Activated CD8-positive, alpha-beta T cell treated with anti-CD3 and anti-CD28 coated beads, Interleukin-2, amount 10 ng/mL, durations not matched to agents 7 days and 5 days (primary cell): ENCODE measurements at regions of chr10 and their contacts with region 1.

Region 1: DNA sequence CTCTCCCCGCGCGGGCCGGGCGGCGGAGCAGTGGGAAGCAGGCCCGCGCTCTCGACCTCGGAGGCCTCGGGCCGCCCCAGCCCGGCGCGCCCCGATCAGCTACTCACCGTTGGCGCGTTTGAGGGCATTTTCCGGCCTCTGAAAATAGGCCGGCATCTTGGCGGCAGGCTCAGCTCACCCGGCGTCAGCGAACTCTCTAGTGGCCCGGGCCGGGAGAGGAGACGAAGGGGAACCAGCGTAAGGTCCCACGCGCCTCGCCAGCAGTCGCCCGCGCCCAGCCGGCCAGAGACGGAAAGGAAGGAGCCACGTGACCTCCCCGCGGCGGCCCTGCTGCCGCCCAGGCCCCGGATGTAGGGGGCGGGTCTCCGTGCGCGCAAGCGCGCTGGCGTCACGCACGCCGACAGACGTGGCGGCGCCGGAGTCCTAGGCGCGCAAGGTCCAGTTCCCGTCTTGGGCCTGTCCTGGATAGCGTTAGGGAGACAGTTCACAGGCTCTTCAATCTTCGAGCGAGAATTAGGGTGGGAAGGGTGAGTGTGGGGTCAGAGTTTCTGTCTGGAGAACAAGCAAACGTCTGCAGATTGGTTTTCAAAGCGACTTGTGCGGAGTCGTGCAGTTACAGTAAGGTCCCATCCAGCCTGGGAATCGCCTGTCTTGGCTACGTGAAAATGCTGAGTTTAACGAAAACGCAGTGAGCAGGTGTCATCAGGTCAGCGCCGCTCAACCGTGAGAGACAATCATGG is at the start of gene EIF3A:
- DNase-seq: peak; percentile 93
- ATAC-seq: peak; percentile 79
- H3K4me3 Mint-ChIP-seq: peak within 1 kb of the TSS; percentile 94
- H3K27ac Mint-ChIP-seq: peak within 1 kb of the TSS; percentile 96
- H3K4me1 Mint-ChIP-seq: peaks cover 38% of the 10 kb centered on the region
- H3K27me3 Mint-ChIP-seq: peaks cover 4% of the 10 kb centered on the region
- total RNA-seq, gene EIF3A: 126 to 127 TPM

Region 2: GRCh38 chr10:119070395-119071165 is 10.1 kb before region 1 on chr10:
- CTCF ChIA-PET with region 1: interaction called, 3 read pairs
- POLR2A ChIA-PET with region 1: interaction called, 12 read pairs
- DNase-seq: no peak
- ATAC-seq: no peak
- H3K4me3 Mint-ChIP-seq: no peak overlapping the region
- H3K27ac Mint-ChIP-seq: no peak overlapping the region
- H3K4me1 Mint-ChIP-seq: peaks cover 26% of the 10 kb centered on the region
- H3K27me3 Mint-ChIP-seq: no peaks in the 10 kb centered on the region

Region 3: GRCh38 chr10:119090968-119091367 is 10.3 kb after region 1 on chr10:
- CTCF ChIA-PET with region 1: interaction called, 3 read pairs
- POLR2A ChIA-PET with region 1: interaction called, 16 read pairs
- DNase-seq: peak; percentile 71
- ATAC-seq: peak; percentile 87
- H3K4me3 Mint-ChIP-seq: peak overlapping the region; percentile 44
- H3K27ac Mint-ChIP-seq: peak overlapping the region; percentile 90
- H3K4me1 Mint-ChIP-seq: peaks cover 49% of the 10 kb centered on the region
- H3K27me3 Mint-ChIP-seq: peaks cover 3% of the 10 kb centered on the region

Region 4: DNA sequence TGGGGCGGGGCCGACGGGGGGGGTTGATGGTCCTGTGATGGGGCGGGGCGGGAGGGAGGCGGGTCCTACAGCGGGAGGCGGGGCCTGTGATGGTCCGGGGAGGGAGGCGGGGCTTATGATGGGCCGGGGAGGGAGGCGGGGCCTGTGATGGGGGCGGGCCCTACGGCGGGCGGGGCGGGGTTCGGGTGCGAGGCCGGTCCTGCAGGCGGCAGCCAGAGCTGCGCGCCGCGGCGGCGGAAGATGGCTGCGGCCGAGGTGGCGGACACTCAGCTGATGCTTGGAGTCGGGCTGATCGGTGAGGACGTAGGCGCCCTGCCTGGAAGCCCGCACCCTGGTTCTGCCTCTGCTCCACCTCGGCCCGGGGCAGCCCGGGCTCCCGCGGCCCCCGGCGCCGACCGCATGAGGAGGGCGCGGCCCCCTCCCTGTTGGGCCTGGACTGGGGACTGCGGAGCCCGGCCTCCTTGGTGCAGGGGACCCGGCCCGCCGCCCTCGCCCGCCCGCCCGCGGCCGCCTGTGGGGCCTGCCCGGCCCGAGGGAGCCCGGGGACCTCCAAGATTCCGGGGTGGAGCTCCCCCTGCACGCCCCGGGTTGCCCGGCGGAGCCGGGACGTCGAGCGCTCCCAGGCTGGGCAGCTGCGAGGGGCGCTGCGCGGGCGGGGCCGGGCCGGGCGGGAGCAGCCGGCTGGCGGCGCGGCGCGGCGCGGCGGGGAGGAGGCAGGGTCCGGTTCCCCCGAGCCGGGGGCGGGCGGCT is 23.4 kb after region 1 on chr10 and contains the start of gene DENND10:
- CTCF ChIA-PET with region 1: interaction called, 5 read pairs
- POLR2A ChIA-PET with region 1: interaction called, 34 read pairs
- DNase-seq: peak; percentile 81
- ATAC-seq: peak; percentile 85
- H3K4me3 Mint-ChIP-seq: peak within 1 kb of the TSS; percentile 78
- H3K27ac Mint-ChIP-seq: peak within 1 kb of the TSS; percentile 60
- H3K4me1 Mint-ChIP-seq: peaks cover 31% of the 10 kb centered on the region
- H3K27me3 Mint-ChIP-seq: peaks cover 2% of the 10 kb centered on the region
- total RNA-seq, gene DENND10: 39.9 to 41.3 TPM

Region 5: DNA sequence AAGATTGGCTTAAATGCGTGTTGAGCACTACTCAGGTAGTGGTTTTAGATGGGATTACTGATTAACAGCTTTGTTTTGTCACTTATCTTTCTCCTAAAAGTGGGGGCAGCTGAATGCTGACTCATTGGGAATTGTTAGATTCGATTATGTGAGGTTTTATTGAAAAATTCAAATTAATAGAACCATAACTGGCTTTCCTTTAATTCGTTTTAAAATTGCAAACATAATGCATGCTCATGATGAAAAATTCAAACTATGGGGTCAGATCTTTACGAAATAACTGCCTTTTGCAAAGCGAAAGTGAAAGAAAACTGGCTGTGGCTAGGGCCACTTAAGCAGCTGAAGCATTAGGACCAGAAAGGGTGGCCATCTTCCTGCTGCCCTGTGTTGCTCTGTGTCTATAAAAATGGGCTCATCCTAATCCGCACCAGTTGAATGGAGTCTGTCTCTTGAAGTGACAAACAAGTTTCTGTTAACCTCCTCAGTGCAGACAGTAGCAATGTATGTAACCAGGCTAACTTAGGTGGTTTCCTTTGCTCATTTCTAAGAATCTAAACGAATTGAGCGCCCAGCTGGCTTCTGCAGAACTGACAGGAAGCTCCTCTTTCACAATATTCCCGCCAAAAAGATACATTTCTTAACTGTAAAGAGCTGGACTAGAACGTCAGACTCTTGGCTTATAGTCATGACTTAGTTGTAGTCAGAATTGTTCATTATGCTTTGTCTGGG is 51.0 kb after region 1 on chr10:
- CTCF ChIA-PET with region 1: interaction called, 8 read pairs
- POLR2A ChIA-PET with region 1: interaction called, 26 read pairs
- DNase-seq: peak; percentile 79
- ATAC-seq: peak; percentile 94
- H3K4me3 Mint-ChIP-seq: peak overlapping the region; percentile 72
- H3K27ac Mint-ChIP-seq: peak overlapping the region; percentile 93
- H3K4me1 Mint-ChIP-seq: peaks cover 59% of the 10 kb centered on the region
- H3K27me3 Mint-ChIP-seq: no peaks in the 10 kb centered on the region